Calu3 (cell line): ENCODE measurements at regions of chr3 and their contacts with region 1.

Region 1: GRCh38 chr3:182258538-182259177 is 534.6 kb upstream of the ATP11B start:
- DNase-seq: peak; percentile 50
- H3K4me3 Mint-ChIP-seq: no peak overlapping the region
- H3K27ac Mint-ChIP-seq: no peak overlapping the region
- H3K4me1 Mint-ChIP-seq: peaks cover 17% of the 10 kb centered on the region
- H3K27me3 Mint-ChIP-seq: no peaks in the 10 kb centered on the region
- CTCF ChIP-seq: peak; percentile 62

Region 2: GRCh38 chr3:181326637-181327223 is 931.9 kb before region 1 on chr3:
- CTCF ChIA-PET with region 1: no interaction called
- intact Hi-C with region 1: loop called (anchors 5 kb)
- DNase-seq: peak; percentile 30
- H3K4me3 Mint-ChIP-seq: no peak overlapping the region
- H3K27ac Mint-ChIP-seq: no peak overlapping the region
- H3K4me1 Mint-ChIP-seq: peaks cover 18% of the 10 kb centered on the region
- H3K27me3 Mint-ChIP-seq: no peaks in the 10 kb centered on the region
- CTCF ChIP-seq: peak; percentile 82

Region 3: GRCh38 chr3:181687190-181687589 is 571.5 kb before region 1 on chr3:
- CTCF ChIA-PET with region 1: no interaction called
- intact Hi-C with region 1: no loop called
- DNase-seq: no peak
- H3K4me3 Mint-ChIP-seq: no peak overlapping the region
- H3K27ac Mint-ChIP-seq: no peak overlapping the region
- H3K4me1 Mint-ChIP-seq: peaks cover 16% of the 10 kb centered on the region
- H3K27me3 Mint-ChIP-seq: no peaks in the 10 kb centered on the region
- CTCF ChIP-seq: no peak

Region 4: DNA sequence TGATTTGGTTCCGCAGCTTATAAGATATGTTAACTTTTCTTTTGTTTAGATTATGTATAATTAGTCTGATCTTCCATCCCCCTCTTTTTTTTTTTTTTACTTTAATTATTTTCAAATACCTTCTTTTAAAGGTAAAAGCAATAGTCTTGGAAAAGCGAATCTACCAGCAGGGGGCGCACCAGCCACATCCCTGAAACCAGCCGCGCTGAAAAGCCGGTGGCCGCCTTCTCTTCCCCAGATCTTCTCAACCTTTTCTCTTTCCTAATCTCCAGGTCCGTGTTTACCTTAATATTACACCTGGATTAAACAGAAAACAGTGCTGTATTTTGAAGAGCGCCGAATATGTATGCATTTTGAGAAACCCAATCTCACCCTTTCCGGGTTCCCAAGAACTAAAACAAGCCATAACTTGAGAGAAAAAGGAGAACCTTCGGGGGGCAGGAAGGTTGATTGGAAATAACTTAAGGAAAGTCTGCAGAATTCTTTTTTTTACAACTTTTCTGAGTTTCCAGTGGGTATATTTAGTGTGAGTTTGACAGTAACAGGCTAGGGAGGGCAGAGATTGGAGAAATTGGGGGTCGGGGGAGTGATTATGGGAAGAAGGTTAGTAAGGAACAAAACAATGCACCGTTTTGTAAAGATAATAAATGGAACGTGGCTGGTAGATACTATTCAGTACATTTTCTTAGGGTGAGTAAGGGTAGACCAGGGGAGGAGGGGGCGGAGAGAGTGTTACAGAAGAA is 549.0 kb before region 1 on chr3:
- CTCF ChIA-PET with region 1: interaction called, 3 read pairs
- intact Hi-C with region 1: loop called (anchors 1 kb)
- DNase-seq: peak; percentile 92
- H3K4me3 Mint-ChIP-seq: peak overlapping the region; percentile 45
- H3K27ac Mint-ChIP-seq: peak overlapping the region; percentile 11
- H3K4me1 Mint-ChIP-seq: peaks cover 22% of the 10 kb centered on the region
- H3K27me3 Mint-ChIP-seq: peaks cover 11% of the 10 kb centered on the region
- CTCF ChIP-seq: peak; percentile 94

Region 5: DNA sequence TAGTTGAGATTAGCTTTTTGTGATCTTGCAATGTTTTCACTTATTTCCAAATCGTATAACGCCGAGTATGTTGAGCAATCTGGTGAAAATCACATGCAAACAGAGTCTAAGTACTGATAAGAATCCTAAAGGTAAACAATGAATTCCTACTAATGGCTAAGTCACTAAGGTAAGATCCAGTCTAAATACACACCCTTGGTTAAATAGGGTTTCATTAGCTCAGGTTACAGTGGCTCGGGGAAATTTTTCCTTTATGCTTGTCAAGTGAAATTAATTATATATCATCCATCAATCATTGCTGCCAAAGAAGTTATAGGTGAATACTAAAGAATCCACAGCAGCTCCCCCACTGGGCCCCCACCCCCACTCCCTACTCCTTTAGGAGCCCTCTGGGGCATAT is 407.6 kb before region 1 on chr3:
- CTCF ChIA-PET with region 1: no interaction called
- intact Hi-C with region 1: loop called (anchors 10 kb)
- DNase-seq: peak; percentile 37
- H3K4me3 Mint-ChIP-seq: peak overlapping the region; percentile 13
- H3K27ac Mint-ChIP-seq: peak overlapping the region; percentile 58
- H3K4me1 Mint-ChIP-seq: peaks cover 37% of the 10 kb centered on the region
- H3K27me3 Mint-ChIP-seq: no peaks in the 10 kb centered on the region
- CTCF ChIP-seq: no peak

Region 6: DNA sequence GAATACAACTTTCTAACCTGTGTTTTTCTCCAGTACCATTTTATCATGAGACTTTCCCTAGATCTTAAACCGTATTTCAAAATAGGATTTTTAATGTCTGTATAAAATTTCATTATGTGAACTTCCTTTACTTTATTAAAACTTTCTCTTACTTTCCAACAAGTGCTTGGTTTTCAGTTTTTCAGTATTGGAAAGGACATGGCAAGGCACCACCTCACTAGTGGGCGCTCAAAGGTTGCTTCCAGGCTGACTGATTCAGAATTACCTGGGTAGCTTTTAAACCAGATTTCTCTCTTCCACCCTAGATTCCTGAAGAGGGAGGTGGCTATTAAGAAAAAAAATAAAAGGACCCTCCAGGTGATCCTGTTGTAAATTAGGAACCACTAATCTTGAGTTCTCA is 310.4 kb before region 1 on chr3:
- CTCF ChIA-PET with region 1: no interaction called
- intact Hi-C with region 1: loop called (anchors 1 kb)
- DNase-seq: peak; percentile 53
- H3K4me3 Mint-ChIP-seq: no peak overlapping the region
- H3K27ac Mint-ChIP-seq: no peak overlapping the region
- H3K4me1 Mint-ChIP-seq: no peaks in the 10 kb centered on the region
- H3K27me3 Mint-ChIP-seq: no peaks in the 10 kb centered on the region
- CTCF ChIP-seq: peak; percentile 49

Region 7: DNA sequence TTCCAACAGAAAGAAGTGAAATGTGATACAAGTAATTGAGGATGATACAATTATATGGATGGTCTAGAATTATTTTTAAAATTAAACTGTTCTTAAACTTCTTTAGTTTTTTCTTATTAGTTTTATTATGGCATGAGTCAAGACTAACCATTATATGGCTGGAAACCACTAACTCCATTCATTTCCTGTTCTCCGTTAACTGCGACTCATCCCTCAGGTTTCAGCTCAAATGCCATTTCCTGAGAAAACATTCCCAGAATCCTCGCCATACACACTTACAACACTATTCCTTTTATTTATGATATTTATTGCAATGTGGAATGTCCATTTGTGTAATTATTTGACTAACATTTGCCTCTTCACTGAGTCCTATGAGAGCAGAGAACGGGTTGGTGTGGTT is 152.8 kb before region 1 on chr3:
- CTCF ChIA-PET with region 1: no interaction called
- intact Hi-C with region 1: no loop called
- DNase-seq: no peak
- H3K4me3 Mint-ChIP-seq: no peak overlapping the region
- H3K27ac Mint-ChIP-seq: no peak overlapping the region
- H3K4me1 Mint-ChIP-seq: no peaks in the 10 kb centered on the region
- H3K27me3 Mint-ChIP-seq: no peaks in the 10 kb centered on the region
- CTCF ChIP-seq: no peak

Region 8: DNA sequence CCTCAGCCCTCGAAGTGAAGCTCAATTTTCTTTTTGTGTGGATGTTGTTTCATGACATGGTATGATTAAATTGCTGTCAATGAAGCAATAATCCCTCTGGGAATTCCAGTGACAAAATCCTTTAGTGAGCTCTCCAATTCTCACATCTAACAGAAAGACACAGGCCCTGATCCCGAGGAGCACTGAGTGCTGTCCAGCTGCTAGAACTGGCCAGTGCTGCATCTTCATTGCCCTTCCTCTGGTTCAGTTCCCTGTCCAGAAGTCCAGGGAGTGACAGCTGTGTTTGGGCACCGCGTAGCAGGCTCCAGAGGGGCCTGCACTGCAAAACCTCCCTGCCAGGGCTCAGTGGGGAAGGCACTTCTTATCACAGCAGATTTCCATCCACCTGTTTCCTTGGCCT is 17.9 kb after region 1 on chr3:
- CTCF ChIA-PET with region 1: interaction called, 15 read pairs
- intact Hi-C with region 1: no loop called
- DNase-seq: no peak
- H3K4me3 Mint-ChIP-seq: no peak overlapping the region
- H3K27ac Mint-ChIP-seq: no peak overlapping the region
- H3K4me1 Mint-ChIP-seq: peaks cover 8% of the 10 kb centered on the region
- H3K27me3 Mint-ChIP-seq: no peaks in the 10 kb centered on the region
- CTCF ChIP-seq: no peak

Region 9: DNA sequence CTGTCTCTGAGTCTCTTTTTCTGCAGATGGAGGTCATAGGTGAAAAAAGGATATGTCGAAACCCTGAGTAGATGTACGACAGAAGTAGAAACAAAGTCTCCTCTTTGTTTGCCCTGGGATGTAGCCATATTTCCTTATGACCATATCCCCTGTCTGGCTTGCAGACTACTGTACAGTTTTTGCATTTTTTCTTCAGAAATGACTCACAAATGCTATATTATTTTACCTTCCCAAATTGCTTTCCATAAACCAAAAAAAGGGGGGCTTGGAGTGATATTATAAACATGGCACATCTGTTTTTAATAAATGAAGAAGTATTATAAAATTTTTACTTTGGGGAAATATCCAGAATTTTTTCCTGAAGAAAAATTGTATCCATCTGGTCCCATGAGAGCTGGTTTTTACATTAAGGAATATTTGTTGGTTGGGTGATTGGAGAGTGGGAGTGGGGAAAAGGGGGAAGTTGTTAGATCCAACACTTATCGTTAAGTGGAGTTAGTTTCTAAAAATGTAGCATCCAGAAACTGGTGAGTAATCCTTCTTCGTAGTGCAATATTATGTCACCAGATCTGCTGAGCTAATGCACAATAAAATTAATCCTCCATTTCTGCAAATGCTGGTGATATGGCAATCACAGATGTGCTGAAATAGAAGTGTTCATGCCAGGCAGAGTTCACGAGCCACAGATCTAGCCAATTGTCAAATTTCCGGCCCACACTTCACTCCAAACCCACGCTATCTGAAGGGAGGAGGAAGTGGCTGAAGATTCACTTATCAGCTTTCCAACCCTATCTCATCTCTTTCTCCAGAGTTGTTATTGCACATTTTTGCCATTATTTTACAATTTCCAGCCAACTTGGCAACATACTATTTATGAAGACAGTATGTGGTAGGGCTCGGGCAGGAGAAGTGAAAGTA is 221.0 kb after region 1 on chr3:
- CTCF ChIA-PET with region 1: no interaction called
- intact Hi-C with region 1: no loop called
- DNase-seq: no peak
- H3K4me3 Mint-ChIP-seq: no peak overlapping the region
- H3K27ac Mint-ChIP-seq: no peak overlapping the region
- H3K4me1 Mint-ChIP-seq: peaks cover 5% of the 10 kb centered on the region
- H3K27me3 Mint-ChIP-seq: no peaks in the 10 kb centered on the region
- CTCF ChIP-seq: no peak

Region 10: GRCh38 chr3:182490596-182491491 is 232.2 kb after region 1 on chr3:
- CTCF ChIA-PET with region 1: no interaction called
- intact Hi-C with region 1: loop called (anchors 2 kb)
- DNase-seq: peak; percentile 54
- H3K4me3 Mint-ChIP-seq: no peak overlapping the region
- H3K27ac Mint-ChIP-seq: no peak overlapping the region
- H3K4me1 Mint-ChIP-seq: peaks cover 24% of the 10 kb centered on the region
- H3K27me3 Mint-ChIP-seq: no peaks in the 10 kb centered on the region
- CTCF ChIP-seq: peak; percentile 70